H1 (cell line): ENCODE measurements at regions of chr14 and their contacts with region 1.

Region 1: GRCh38 chr14:100524933-100525243 is 62.3 kb downstream of the BEGAIN start:
- DNase-seq: peak in 1 of 2 experiments; percentile 75
- H3K4me3 ChIP-seq: no peak overlapping the region
- H3K27ac ChIP-seq: no peak overlapping the region
- H3K4me1 ChIP-seq: peaks cover 2 to 8% (median 5%) of the 10 kb centered on the region in 4 experiments; a peak in 4 of 7 replicates
- H3K27me3 ChIP-seq: no peaks in the 10 kb centered on the region; a peak in 1 of 7 replicates
- CTCF ChIP-seq: peak; percentile 61 to 88 (median 67)
- EP300 ChIP-seq: no peak
- POLR2A ChIP-seq: no peak
- RAD21 ChIP-seq: peak; percentile 89 to 92

Region 2: GRCh38 chr14:100440187-100440631 is 84.7 kb before region 1 on chr14:
- CTCF ChIA-PET with region 1: interaction called, 12 read pairs
- POLR2A ChIA-PET with region 1: no interaction called
- DNase-seq: peak; percentile 31 to 75
- H3K4me3 ChIP-seq: no peak overlapping the region
- H3K27ac ChIP-seq: no peak overlapping the region
- H3K4me1 ChIP-seq: peaks cover 0 to 6% (median 4%) of the 10 kb centered on the region in 4 experiments; a peak in 4 of 7 replicates
- H3K27me3 ChIP-seq: no peaks in the 10 kb centered on the region
- CTCF ChIP-seq: peak; percentile 79 to 84 (median 79)
- EP300 ChIP-seq: no peak
- POLR2A ChIP-seq: no peak
- RAD21 ChIP-seq: peak; percentile 91 to 92

Region 3: GRCh38 chr14:100503251-100503650 is 21.6 kb before region 1 on chr14:
- CTCF ChIA-PET with region 1: interaction called, 14 read pairs
- POLR2A ChIA-PET with region 1: no interaction called
- DNase-seq: no peak
- H3K4me3 ChIP-seq: no peak overlapping the region
- H3K27ac ChIP-seq: no peak overlapping the region
- H3K4me1 ChIP-seq: no peaks in the 10 kb centered on the region; a peak in 1 of 7 replicates
- H3K27me3 ChIP-seq: no peaks in the 10 kb centered on the region
- CTCF ChIP-seq: no peak
- EP300 ChIP-seq: no peak
- POLR2A ChIP-seq: no peak
- RAD21 ChIP-seq: no peak

Region 4: GRCh38 chr14:100540141-100540925 is 15.4 kb after region 1 on chr14:
- CTCF ChIA-PET with region 1: interaction called, 44 read pairs
- POLR2A ChIA-PET with region 1: interaction called, 3 read pairs
- DNase-seq: peak in 1 of 2 experiments; percentile 17
- H3K4me3 ChIP-seq: no peak overlapping the region
- H3K27ac ChIP-seq: no peak overlapping the region
- H3K4me1 ChIP-seq: peaks cover 1 to 5% (median 3%) of the 10 kb centered on the region in 4 experiments; a peak in 3 of 7 replicates
- H3K27me3 ChIP-seq: no peaks in the 10 kb centered on the region; a peak in 1 of 7 replicates
- CTCF ChIP-seq: peak in 2 of 3 experiments; percentile 73 to 78; a peak in 3 of 4 replicates
- EP300 ChIP-seq: no peak
- POLR2A ChIP-seq: no peak
- RAD21 ChIP-seq: peak; percentile 37 to 47

Region 5: DNA sequence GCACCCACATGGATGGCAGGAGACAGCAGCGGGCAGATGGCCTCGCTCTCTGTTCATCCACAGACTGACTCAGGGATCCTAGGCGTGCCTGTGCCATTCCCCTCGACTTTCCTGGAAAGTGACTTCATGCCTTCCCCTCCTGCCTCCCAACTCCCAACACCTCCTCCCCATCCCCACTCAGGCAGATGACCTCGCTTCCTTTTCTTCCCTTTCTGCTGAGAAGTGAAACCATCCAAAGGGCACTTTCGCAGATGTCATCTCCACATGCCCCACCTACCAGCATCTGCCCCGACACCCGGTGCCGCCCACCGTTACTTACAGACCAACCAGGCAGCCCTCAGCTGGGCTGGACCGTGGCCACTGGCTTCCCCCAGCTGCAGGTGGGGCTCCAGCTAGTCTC is 32.8 kb after region 1 on chr14:
- CTCF ChIA-PET with region 1: interaction called, 14 read pairs
- POLR2A ChIA-PET with region 1: interaction called, 3 read pairs
- DNase-seq: no peak
- H3K4me3 ChIP-seq: no peak overlapping the region
- H3K27ac ChIP-seq: no peak overlapping the region
- H3K4me1 ChIP-seq: peaks cover 0 to 19% (median 17%) of the 10 kb centered on the region in 4 experiments; a peak in 6 of 7 replicates
- H3K27me3 ChIP-seq: peaks cover 0 to 5% (median 2%) of the 10 kb centered on the region in 4 experiments; a peak in 3 of 7 replicates
- CTCF ChIP-seq: no peak
- EP300 ChIP-seq: no peak
- POLR2A ChIP-seq: no peak
- RAD21 ChIP-seq: no peak